Calu3 (cell line): ENCODE measurements at regions of chr9 and their contacts with region 1.

Region 1: GRCh38 chr9:127955294-127956035 is 17.8 kb upstream of the DPM2 start:
- DNase-seq: peak; percentile 87
- H3K4me3 Mint-ChIP-seq: peak overlapping the region; percentile 57
- H3K27ac Mint-ChIP-seq: peak overlapping the region; percentile 85
- H3K4me1 Mint-ChIP-seq: peaks cover 47% of the 10 kb centered on the region
- H3K27me3 Mint-ChIP-seq: no peaks in the 10 kb centered on the region
- CTCF ChIP-seq: peak; percentile 60

Region 2: DNA sequence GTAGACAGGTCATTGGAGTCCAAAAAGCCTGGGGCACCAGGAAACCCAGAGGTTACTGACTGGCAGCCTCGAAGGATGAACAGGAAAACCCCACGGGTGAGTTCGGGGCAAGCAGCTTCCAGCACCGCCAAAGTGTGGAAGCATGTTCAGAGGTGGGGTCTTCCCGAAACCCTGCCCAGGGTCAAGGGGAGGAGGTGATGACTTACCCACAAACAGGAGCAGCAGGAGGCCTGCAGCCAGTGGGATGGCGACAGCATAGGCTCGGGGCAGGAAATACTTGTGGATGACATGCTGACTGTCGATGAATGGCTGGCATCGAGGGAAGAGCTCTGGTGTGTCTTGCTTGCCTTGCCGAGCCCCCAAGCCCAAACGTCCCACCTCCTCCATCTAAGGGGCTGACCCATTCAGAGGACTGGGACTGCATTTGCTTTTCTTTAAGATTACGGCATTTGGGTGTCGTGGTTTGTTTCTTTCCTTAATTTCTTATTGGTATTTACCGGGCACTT is 19.1 kb before region 1 on chr9:
- CTCF ChIA-PET with region 1: no interaction called
- intact Hi-C with region 1: no loop called
- DNase-seq: no peak
- H3K4me3 Mint-ChIP-seq: peak overlapping the region; percentile 98
- H3K27ac Mint-ChIP-seq: peak overlapping the region; percentile 50
- H3K4me1 Mint-ChIP-seq: peaks cover 38% of the 10 kb centered on the region
- H3K27me3 Mint-ChIP-seq: no peaks in the 10 kb centered on the region
- CTCF ChIP-seq: no peak

Region 3: GRCh38 chr9:127979333-127980110 is 24.1 kb after region 1 on chr9:
- CTCF ChIA-PET with region 1: interaction called, 3 read pairs
- intact Hi-C with region 1: loop called (anchors 2 kb)
- DNase-seq: peak; percentile 42
- H3K4me3 Mint-ChIP-seq: peak overlapping the region; percentile 87
- H3K27ac Mint-ChIP-seq: peak overlapping the region; percentile 81
- H3K4me1 Mint-ChIP-seq: peaks cover 16% of the 10 kb centered on the region
- H3K27me3 Mint-ChIP-seq: no peaks in the 10 kb centered on the region
- CTCF ChIP-seq: no peak